ENCODE measurements at regions of chr3 and their contacts with region 1.

Region 1: GRCh38 chr3:81743096-81744025 is 18.1 kb downstream of the GBE1 start:
- DNase-seq: no peak
- H3K4me3 ChIP-seq: no peak overlapping the region
- H3K27ac ChIP-seq: peak overlapping the region; percentile 50 to 81
- H3K4me1 ChIP-seq: no peaks in the 10 kb centered on the region
- H3K27me3 ChIP-seq: no peaks in the 10 kb centered on the region
- CTCF ChIP-seq: no peak
- POLR2A ChIP-seq: no peak

Region 2: GRCh38 chr3:81753416-81754027 is 10.2 kb after region 1 on chr3:
- intact Hi-C with region 1: loop called (anchors 2 kb)
- DNase-seq: no peak
- H3K4me3 ChIP-seq: no peak overlapping the region
- H3K27ac ChIP-seq: no peak overlapping the region
- H3K4me1 ChIP-seq: no peaks in the 10 kb centered on the region
- H3K27me3 ChIP-seq: no peaks in the 10 kb centered on the region
- CTCF ChIP-seq: no peak
- POLR2A ChIP-seq: no peak

Region 3: GRCh38 chr3:82773207-82773606 is 1029.8 kb after region 1 on chr3:
- intact Hi-C with region 1: no loop called
- DNase-seq: no peak
- H3K4me3 ChIP-seq: no peak overlapping the region
- H3K27ac ChIP-seq: no peak overlapping the region
- H3K4me1 ChIP-seq: no peaks in the 10 kb centered on the region
- H3K27me3 ChIP-seq: no peaks in the 10 kb centered on the region
- CTCF ChIP-seq: no peak
- POLR2A ChIP-seq: no peak

Measured in breast epithelium (tissue), 4 donors.